ENCODE measurements at regions of chr1 and their contacts with region 1.

Region 1: DNA sequence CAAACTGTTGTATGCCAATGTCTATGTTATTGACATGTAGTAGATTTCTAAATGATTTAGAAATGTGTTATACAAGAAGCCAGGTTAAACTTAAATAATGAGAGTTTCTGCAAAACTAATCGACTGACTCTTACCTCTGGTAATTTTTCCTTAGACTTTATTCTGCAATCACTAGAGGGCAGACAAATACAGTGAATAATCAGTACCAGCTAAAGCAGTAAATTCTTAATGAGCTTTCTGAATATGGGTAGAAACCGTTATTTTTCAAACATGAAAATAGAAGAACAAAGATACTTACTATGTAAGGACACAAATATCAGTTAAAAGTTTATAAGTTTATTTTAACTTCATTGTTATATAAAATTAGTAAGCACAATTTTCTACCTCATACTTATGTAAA is 97.9 kb upstream of the RGS1 start:
- DNase-seq: no peak
- H3K4me3 ChIP-seq: no peak overlapping the region
- H3K27ac ChIP-seq: no peak overlapping the region
- H3K4me1 ChIP-seq: no peaks in the 10 kb centered on the region
- H3K27me3 ChIP-seq: no peaks in the 10 kb centered on the region
- CTCF ChIP-seq: peak in 4 of 6 experiments; percentile 20 to 84 (median 64)
- POLR2A ChIP-seq: no peak

Region 2: DNA sequence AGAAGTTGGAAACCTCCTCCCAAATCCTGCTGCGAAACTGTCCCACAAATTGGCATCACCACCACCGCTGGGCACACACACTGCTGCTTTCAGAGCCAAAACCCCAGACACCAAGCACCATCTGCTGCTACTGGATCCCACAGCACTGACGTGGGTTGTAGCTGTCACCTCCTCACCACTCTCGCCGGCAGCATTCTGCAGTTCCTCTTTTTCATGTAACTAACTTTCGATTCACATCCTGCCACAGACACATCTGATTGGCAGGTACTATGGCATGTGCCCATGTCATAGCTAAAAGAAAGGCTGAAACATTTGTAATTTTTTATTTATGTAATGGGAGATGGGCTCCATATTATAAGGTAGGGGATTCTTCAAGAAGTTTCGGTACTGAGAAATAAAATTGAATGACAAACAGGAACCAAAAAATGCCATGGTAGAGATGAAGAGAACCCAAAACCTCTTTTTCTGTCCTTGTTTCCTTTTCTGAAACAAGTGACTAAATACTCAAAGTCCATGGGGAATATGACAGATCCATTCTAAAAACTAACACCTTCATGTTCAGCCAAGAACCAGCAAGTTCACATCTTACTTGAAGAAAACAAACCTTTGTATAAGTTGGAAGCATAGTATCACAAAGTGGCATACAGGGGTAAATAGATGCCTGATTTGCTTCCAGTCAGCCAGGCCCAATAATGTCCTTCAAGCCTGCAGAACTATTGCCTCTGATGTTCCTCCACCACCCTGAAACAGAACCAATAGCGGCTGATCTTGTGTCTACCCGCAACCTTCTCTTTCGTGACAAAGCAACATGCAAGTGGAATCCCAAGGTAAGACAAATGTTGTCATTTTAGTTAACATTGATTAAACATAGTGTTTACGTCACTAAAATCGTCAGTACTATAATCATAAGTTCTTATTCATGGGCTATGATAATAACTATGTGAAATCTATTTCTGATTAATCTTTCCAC is 131.8 kb after region 1 on chr1:
- intact Hi-C with region 1: loop called (anchors 2 kb)
- DNase-seq: peak; percentile 8 to 11
- H3K4me3 ChIP-seq: no peak overlapping the region
- H3K27ac ChIP-seq: no peak overlapping the region
- H3K4me1 ChIP-seq: no peaks in the 10 kb centered on the region
- H3K27me3 ChIP-seq: no peaks in the 10 kb centered on the region
- CTCF ChIP-seq: no peak
- POLR2A ChIP-seq: no peak

Region 3: GRCh38 chr1:193019442-193020026 is 541.9 kb after region 1 on chr1:
- intact Hi-C with region 1: loop called (anchors 10 kb)
- DNase-seq: no peak
- H3K4me3 ChIP-seq: no peak overlapping the region
- H3K27ac ChIP-seq: no peak overlapping the region
- H3K4me1 ChIP-seq: no peaks in the 10 kb centered on the region
- H3K27me3 ChIP-seq: no peaks in the 10 kb centered on the region
- CTCF ChIP-seq: peak in 5 of 6 experiments; percentile 21 to 56 (median 45)
- POLR2A ChIP-seq: no peak

Measured in thyroid gland (tissue), 4 donors.